ENCODE measurements at regions of chr15 and their contacts with region 1.

Region 1: DNA sequence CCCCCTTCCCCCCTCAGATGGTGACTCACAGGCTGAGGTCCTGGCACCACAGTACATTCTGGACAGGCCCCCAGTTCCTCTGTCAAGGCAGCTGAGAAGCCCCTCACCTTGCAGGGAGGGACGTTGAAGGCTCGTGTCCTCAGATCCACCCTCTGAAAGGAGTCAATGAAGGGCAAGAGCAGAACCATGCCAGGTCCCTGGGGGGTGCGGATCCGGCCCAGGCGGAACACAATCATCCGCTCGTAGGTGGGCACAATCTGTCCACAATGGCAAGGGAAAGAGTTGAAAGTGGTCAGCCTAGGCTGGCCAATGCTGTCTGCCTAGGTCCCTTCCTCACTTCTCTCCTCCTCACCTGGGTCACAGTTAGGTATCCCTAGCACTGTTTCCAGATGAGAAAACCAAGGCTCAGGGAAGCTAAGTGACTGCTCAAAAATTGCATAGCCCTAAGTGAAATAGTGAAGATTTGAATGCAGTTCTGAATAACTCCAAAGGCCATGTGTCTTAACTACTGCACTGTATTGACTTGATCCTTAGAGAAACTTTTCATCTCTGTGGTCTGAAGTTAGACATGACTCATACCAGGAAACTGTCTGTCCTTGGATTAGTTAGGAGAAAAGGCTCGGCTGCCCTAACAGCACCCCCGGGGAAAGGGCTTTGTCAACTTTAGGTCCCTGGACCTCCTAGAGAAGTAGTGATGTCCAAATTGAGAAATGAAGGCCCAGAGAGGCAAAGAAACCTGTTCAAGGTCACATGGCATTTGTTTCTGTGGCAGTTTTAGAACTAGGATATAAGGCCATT is 2.9 kb downstream of the STOML1 start:
- DNase-seq: no peak
- H3K27ac ChIP-seq: peak overlapping the region; percentile 99
- CTCF ChIP-seq: no peak

Region 2: GRCh38 chr15:73575636-73576247 is 413.5 kb before region 1 on chr15:
- CTCF ChIA-PET with region 1: no interaction called
- POLR2A ChIA-PET with region 1: no interaction called
- DNase-seq: peak; percentile 82
- H3K27ac ChIP-seq: peak overlapping the region; percentile 98
- CTCF ChIP-seq: no peak

Region 3: DNA sequence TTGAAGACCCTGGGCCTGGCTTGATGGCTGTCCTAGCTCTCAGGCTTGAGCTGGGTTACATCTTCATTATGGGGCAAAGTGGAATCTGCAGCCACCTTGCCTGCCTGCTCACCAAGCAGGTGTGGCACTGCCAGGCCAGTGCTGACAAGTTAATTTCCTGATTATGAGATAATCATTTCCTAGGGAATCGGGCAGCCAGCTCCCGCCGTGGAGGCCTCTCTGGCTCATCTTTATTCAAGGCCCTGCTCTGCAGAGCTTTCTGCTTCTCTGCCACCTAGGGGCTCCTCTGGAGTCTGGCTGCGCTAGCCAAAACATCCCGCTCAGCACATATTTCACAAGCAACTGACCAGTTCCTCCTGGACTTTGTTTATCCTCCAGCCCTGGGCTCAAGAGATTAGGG is 53.0 kb before region 1 on chr15:
- CTCF ChIA-PET with region 1: no interaction called
- POLR2A ChIA-PET with region 1: no interaction called
- DNase-seq: peak; percentile 81
- H3K27ac ChIP-seq: peak overlapping the region; percentile 53
- CTCF ChIP-seq: peak; percentile 38

Region 4: GRCh38 chr15:73972984-73973682 is 16.1 kb before region 1 on chr15:
- CTCF ChIA-PET with region 1: interaction called, 11 read pairs
- POLR2A ChIA-PET with region 1: no interaction called
- DNase-seq: peak; percentile 85
- H3K27ac ChIP-seq: no peak overlapping the region; the same call in 1 of the 2 replicates
- CTCF ChIP-seq: peak; percentile 96